ENCODE measurements at regions of chr16 and their contacts with region 1.

Region 1: GRCh38 chr16:46853713-46854443 is 22.9 kb upstream of the C16orf87 start:
- DNase-seq: peak; percentile 78 to 98 (median 90)

Region 2: DNA sequence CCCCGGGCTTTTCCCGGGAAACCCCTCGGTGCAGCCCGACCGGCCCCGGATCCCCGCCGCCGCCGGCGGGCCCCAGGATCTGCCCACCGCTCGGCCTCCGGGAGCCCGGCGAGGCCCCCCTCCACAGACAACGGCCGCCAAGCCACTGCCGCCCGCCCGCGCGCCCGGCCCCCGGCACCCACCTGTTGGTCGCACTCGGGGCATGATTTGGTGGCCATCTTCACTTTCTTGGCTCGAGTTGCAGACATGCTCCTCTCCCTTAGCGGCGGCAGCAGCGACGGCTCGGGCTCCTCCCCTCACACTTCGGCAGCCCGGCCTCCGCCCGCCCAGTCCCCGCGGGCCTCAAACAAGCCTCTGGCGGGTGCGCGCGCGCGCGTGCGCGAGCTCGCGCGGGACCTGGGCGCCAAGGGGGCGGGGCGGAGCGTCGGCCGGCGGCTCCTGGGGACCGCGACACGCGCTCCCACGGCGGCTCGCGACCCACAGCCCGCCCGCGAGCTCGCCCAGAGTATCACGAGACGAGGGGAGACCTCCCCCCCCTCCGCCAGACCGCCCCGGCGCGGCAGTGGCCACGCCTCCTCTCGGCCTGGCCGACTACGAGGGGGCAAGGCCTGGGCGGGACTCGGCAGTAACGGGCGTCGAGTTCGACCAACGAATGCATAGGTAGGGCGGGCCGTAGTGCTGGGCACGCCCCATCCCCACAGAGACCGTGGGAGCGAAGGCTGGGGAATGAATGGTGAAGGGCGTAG is 22.8 kb before region 1 on chr16 and contains the start of gene C16orf87:
- intact Hi-C with region 1: no loop called
- DNase-seq: peak; percentile 86 to 99 (median 94)

Region 3: GRCh38 chr16:46929378-46930332 is 75.8 kb after region 1 on chr16:
- intact Hi-C with region 1: loop called (anchors 1 kb)
- DNase-seq: peak; percentile 67 to 97 (median 86)

Measured in posterior cingulate gyrus (tissue), 11 donors.